ENCODE measurements at regions of chr6 and their contacts with region 1.

Region 1: DNA sequence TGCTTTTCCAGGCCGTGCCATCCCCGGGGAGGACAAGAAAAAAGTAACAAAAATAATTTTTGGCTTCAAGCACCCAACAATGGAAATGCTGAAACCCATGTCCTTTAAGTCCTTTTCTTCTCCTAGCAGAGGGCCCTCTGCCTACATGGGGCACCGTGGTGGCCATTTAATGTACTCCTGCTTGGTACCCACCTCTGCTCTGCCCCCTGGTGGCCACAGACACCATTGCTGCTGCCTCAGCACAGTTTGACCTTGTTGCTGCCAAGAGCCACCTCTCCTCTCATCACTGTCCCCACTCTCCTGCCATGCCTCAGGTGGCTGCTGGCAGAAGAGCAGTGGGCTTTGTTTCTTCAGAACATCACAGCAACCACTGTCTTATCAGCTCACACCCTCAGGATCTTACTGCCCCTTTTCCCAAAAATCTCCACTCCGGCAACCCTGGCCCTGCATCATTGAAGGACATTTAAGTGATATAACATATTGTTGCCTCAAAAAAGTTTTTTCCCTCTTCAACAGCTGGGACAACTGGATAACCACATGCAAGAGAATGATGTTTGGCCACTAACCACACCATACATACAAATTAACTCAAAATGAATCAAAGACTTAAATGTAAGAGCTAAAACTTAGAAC is 12.9 kb upstream of the ARMC2 start:
- DNase-seq: peak; percentile 60
- ATAC-seq: peak; percentile 96
- H3K4me3 ChIP-seq: no peak overlapping the region
- H3K27ac ChIP-seq: no peak overlapping the region
- H3K4me1 ChIP-seq: peaks cover 9% of the 10 kb centered on the region; the same call in 1 of the 2 replicates
- H3K27me3 ChIP-seq: peaks cover 2 to 19% of the 10 kb centered on the region in 2 experiments; a peak in 4 of 5 replicates
- CTCF ChIP-seq: peak; percentile 95
- EP300 ChIP-seq: no peak
- POLR2A ChIP-seq: no peak
- RAD21 ChIP-seq: peak; percentile 82

Region 2: DNA sequence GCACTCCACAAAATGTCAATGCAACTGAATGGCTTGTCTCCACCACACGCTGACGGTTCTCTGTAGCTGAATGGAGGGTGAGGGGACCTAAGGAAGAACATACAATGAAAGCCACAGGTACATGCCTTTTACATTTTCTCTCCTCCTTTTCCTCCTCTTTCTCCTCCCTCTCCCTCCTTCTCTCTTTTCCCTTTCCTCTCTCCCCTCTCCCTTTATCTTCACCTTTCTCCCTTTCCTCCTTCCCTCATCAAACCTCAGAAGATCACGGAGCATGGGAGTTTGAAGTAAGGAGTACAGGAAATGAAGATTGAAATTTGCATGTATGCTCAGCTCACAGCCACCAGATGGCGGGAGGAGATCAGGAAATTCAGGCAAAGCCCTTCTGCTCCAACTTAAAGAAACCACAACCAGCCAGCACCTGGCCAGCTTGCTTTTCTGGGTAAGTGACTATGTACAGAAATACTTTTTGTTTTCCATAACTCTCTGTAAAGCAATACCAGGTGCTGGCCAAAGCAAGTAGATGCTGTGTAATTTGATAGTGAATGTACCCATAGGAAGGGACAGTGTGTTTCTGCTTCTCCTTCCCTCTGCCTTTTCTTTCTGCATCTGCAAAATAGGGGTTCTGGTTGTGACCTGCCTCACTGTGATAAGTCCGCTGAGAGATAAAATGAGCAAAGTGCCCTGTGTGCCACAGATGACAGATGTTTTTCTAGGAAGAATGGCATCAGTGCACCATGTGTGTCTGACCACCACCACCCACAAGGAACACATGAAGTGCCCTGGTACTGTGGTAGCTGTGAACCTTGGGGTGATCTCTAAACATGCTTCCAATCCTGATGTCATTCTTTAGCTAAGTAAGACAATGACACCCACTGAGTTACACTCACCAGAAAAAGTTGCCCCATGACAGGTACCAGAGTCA is 293.2 kb before region 1 on chr6:
- CTCF ChIA-PET with region 1: interaction called, 60 read pairs
- POLR2A ChIA-PET with region 1: no interaction called
- in situ Hi-C with region 1: loop called (anchors 5 kb)
- intact Hi-C with region 1: loop called (anchors 1 kb)
- DNase-seq: peak; percentile 51
- ATAC-seq: peak; percentile 84
- H3K4me3 ChIP-seq: no peak overlapping the region
- H3K27ac ChIP-seq: no peak overlapping the region
- H3K4me1 ChIP-seq: peaks cover 15% of the 10 kb centered on the region
- H3K27me3 ChIP-seq: peaks cover 0 to 11% of the 10 kb centered on the region in 2 experiments; a peak in 1 of 5 replicates
- CTCF ChIP-seq: peak; percentile 92
- EP300 ChIP-seq: no peak
- POLR2A ChIP-seq: no peak
- RAD21 ChIP-seq: peak; percentile 86

Region 3: GRCh38 chr6:108558372-108559096 is 276.8 kb before region 1 on chr6:
- CTCF ChIA-PET with region 1: no interaction called
- POLR2A ChIA-PET with region 1: no interaction called
- in situ Hi-C with region 1: no loop called
- intact Hi-C with region 1: loop called (anchors 5 kb)
- DNase-seq: peak; percentile 94
- ATAC-seq: peak; percentile 51
- H3K4me3 ChIP-seq: peak overlapping the region; percentile 90 to 99 (median 96)
- H3K27ac ChIP-seq: peak overlapping the region; percentile 96
- H3K4me1 ChIP-seq: peaks cover 48% of the 10 kb centered on the region
- H3K27me3 ChIP-seq: no peaks in the 10 kb centered on the region; a peak in 2 of 5 replicates
- CTCF ChIP-seq: no peak
- EP300 ChIP-seq: peak; percentile 27 to 68; a peak in 2 of 4 replicates
- POLR2A ChIP-seq: no peak; a peak in 1 of 4 replicates
- RAD21 ChIP-seq: no peak

Region 4: GRCh38 chr6:108714101-108714765 is 121.1 kb before region 1 on chr6:
- CTCF ChIA-PET with region 1: no interaction called
- POLR2A ChIA-PET with region 1: no interaction called
- in situ Hi-C with region 1: no loop called
- intact Hi-C with region 1: loop called (anchors 1 kb)
- DNase-seq: no peak
- ATAC-seq: peak; percentile 67
- H3K4me3 ChIP-seq: peak overlapping the region in 1 of 3 experiments; percentile 29; a peak in 2 of 6 replicates
- H3K27ac ChIP-seq: no peak overlapping the region
- H3K4me1 ChIP-seq: peaks cover 82% of the 10 kb centered on the region
- H3K27me3 ChIP-seq: peaks cover 0 to under 1% of the 10 kb centered on the region in 2 experiments; a peak in 1 of 5 replicates
- CTCF ChIP-seq: no peak
- EP300 ChIP-seq: no peak
- POLR2A ChIP-seq: no peak
- RAD21 ChIP-seq: no peak

Region 5: GRCh38 chr6:108782179-108783041 is 52.9 kb before region 1 on chr6:
- CTCF ChIA-PET with region 1: no interaction called
- POLR2A ChIA-PET with region 1: no interaction called
- in situ Hi-C with region 1: no loop called
- intact Hi-C with region 1: loop called (anchors 5 kb)
- DNase-seq: peak; percentile 40
- ATAC-seq: peak; percentile 91
- H3K4me3 ChIP-seq: peak overlapping the region; percentile 49 to 85 (median 73)
- H3K27ac ChIP-seq: no peak overlapping the region
- H3K4me1 ChIP-seq: peaks cover 63% of the 10 kb centered on the region
- H3K27me3 ChIP-seq: no peaks in the 10 kb centered on the region
- CTCF ChIP-seq: peak; percentile 96
- EP300 ChIP-seq: no peak
- POLR2A ChIP-seq: no peak
- RAD21 ChIP-seq: peak; percentile 86

Region 6: DNA sequence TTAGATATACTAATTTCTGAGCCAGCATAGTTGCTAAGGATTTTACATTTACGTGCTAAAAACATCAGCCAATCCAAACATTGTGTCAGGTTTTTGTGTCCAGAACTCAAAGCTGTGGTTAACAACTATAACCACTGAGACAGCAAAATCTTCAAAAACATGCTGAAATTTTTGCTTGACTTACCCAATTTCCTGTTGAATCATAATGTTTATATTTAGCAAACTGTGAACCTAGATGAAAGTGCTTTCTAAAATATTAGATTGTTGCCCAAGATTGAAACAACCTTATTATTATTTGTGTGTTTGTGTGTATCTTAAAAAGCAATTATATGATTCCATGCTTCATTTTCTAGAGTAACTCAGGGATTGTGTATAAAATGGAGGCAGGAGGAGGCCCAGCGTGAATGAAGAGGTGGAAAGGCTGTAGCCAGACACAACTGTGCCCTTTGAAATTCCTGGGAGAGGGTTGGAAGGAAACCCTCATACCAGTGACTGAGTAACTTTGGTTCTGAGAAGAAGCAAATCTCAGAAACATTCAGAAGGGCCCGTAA is 60.9 kb after region 1 on chr6:
- CTCF ChIA-PET with region 1: interaction called, 3 read pairs
- POLR2A ChIA-PET with region 1: no interaction called
- in situ Hi-C with region 1: no loop called
- intact Hi-C with region 1: loop called (anchors 2 kb)
- DNase-seq: no peak
- ATAC-seq: no peak
- H3K4me3 ChIP-seq: no peak overlapping the region
- H3K27ac ChIP-seq: no peak overlapping the region
- H3K4me1 ChIP-seq: peaks cover 15% of the 10 kb centered on the region
- H3K27me3 ChIP-seq: peaks cover 0 to 1% of the 10 kb centered on the region in 2 experiments; a peak in 1 of 5 replicates
- CTCF ChIP-seq: no peak
- EP300 ChIP-seq: no peak
- POLR2A ChIP-seq: no peak
- RAD21 ChIP-seq: no peak

Region 7: DNA sequence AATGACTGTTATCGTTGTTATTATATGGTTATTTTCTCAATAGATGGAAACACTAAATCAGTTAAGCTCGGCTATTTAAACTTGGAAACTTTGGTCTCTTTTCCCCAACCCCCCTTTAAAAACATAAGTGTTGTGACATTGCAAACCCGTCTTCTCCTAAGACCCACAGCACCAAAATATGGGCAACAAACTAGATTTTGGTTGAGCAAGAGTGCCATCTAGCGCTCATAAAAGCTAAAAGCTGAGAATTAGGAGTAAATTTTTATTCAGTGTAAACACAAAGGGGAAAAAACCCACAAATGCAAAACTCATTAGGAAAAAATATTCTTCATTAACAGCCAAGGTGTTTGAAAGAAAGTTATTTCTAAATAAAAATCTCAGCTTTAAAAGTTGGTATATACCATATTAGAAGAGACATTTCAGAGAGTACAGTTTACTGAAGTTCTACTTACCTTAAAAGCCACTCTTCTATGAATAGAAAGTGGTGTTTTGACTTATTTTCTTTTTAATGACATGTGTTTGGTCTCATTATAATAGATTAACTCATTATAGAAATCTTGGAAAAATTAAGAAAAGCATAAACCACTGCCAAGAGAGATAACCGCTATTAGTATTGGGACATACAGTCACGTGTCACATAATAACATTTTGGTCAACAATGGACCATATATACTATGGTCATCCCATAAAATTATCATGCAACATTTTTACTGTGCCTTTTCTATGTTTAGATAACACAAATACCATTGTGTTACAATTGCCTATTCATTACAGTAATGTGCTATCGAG is 238.2 kb after region 1 on chr6:
- CTCF ChIA-PET with region 1: interaction called, 5 read pairs
- POLR2A ChIA-PET with region 1: no interaction called
- in situ Hi-C with region 1: no loop called
- intact Hi-C with region 1: loop called (anchors 2 kb)
- DNase-seq: peak; percentile 67
- ATAC-seq: peak; percentile 48
- H3K4me3 ChIP-seq: no peak overlapping the region
- H3K27ac ChIP-seq: no peak overlapping the region
- H3K4me1 ChIP-seq: peaks cover 6% of the 10 kb centered on the region; the same call in 1 of the 2 replicates
- H3K27me3 ChIP-seq: no peaks in the 10 kb centered on the region
- CTCF ChIP-seq: peak; percentile 76
- EP300 ChIP-seq: no peak
- POLR2A ChIP-seq: no peak
- RAD21 ChIP-seq: peak; percentile 75; the same call in 1 of the 2 replicates